ENCODE measurements at regions of chr19 and their contacts with region 1.

Region 1: DNA sequence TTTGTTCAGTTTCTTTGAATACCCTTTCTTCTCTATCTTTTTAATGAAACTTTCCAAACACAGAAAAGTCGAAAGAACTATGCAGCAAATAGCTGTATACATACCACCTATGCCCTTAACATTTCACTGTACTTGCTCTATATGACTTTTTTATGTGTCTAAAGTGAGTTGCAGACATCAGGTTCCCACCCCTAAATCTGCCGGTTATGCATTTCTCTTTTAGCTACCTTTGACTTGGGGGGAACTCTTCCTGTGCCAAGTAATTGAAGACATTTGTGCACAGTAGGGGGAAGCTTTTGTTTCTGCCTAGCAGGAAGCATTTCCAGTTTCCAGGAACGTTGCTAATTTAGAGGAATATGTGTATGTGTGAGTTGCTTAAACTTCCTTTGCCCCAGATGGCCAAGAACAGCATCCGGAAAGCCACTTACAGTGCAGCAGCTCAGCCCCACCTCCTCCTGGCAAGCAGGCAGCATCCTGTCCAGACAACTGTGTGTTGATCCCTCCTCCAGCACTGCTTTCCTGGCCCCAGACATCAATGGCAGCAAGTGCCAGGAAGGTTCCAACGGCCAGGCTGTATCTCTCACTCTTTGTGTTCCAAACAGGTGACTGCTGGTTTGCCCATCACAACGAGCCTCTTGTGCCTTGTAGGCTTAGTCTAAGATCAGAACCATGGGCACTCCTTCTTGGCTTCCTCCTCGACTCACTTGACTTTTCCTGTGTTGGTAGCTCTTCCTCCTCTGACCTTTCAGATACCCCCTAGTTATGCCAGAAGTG is 14.7 kb upstream of the GRAMD1A start:
- DNase-seq: peak in 5 of 9 experiments; percentile 30 to 70 (median 49)
- ATAC-seq: peak; percentile 65
- H3K4me3 ChIP-seq: peak overlapping the region in 1 of 2 experiments; percentile 12
- H3K4me3 Mint-ChIP-seq: peak overlapping the region; percentile 63
- H3K27ac ChIP-seq: peak overlapping the region; percentile 29 to 36
- H3K27ac Mint-ChIP-seq: peak overlapping the region; percentile 92
- H3K4me1 ChIP-seq: peaks cover 13% of the 10 kb centered on the region
- H3K4me1 Mint-ChIP-seq: peaks cover 14% of the 10 kb centered on the region
- H3K27me3 ChIP-seq: no peaks in the 10 kb centered on the region
- H3K27me3 Mint-ChIP-seq: no peaks in the 10 kb centered on the region
- CTCF ChIP-seq: no peak

Region 2: GRCh38 chr19:34692549-34692948 is 292.9 kb before region 1 on chr19:
- CTCF ChIA-PET with region 1: no interaction called
- POLR2A ChIA-PET with region 1: no interaction called
- intact Hi-C with region 1: no loop called
- DNase-seq: no peak
- ATAC-seq: no peak
- H3K4me3 ChIP-seq: no peak overlapping the region
- H3K4me3 Mint-ChIP-seq: no peak overlapping the region
- H3K27ac ChIP-seq: no peak overlapping the region
- H3K27ac Mint-ChIP-seq: no peak overlapping the region
- H3K4me1 ChIP-seq: no peaks in the 10 kb centered on the region
- H3K4me1 Mint-ChIP-seq: no peaks in the 10 kb centered on the region
- H3K27me3 ChIP-seq: no peaks in the 10 kb centered on the region
- H3K27me3 Mint-ChIP-seq: peaks cover 49% of the 10 kb centered on the region
- CTCF ChIP-seq: no peak

Region 3: GRCh38 chr19:34999498-35000341 is 14.3 kb after region 1 on chr19 and contains the start of gene GRAMD1A:
- CTCF ChIA-PET with region 1: interaction called, 6 read pairs
- POLR2A ChIA-PET with region 1: interaction called, 14 read pairs
- intact Hi-C with region 1: no loop called
- DNase-seq: peak; percentile 33 to 85 (median 70)
- ATAC-seq: peak; percentile 37
- H3K4me3 ChIP-seq: peak within 1 kb of the TSS; percentile 64 to 71
- H3K4me3 Mint-ChIP-seq: peak within 1 kb of the TSS; percentile 97
- H3K27ac ChIP-seq: peak within 1 kb of the TSS; percentile 86 to 89
- H3K27ac Mint-ChIP-seq: peak within 1 kb of the TSS; percentile 98
- H3K4me1 ChIP-seq: peaks cover 79% of the 10 kb centered on the region
- H3K4me1 Mint-ChIP-seq: peaks cover 64% of the 10 kb centered on the region
- H3K27me3 ChIP-seq: no peaks in the 10 kb centered on the region
- H3K27me3 Mint-ChIP-seq: no peaks in the 10 kb centered on the region
- CTCF ChIP-seq: no peak
- total RNA-seq, gene GRAMD1A: 207 to 221 TPM

Region 4: DNA sequence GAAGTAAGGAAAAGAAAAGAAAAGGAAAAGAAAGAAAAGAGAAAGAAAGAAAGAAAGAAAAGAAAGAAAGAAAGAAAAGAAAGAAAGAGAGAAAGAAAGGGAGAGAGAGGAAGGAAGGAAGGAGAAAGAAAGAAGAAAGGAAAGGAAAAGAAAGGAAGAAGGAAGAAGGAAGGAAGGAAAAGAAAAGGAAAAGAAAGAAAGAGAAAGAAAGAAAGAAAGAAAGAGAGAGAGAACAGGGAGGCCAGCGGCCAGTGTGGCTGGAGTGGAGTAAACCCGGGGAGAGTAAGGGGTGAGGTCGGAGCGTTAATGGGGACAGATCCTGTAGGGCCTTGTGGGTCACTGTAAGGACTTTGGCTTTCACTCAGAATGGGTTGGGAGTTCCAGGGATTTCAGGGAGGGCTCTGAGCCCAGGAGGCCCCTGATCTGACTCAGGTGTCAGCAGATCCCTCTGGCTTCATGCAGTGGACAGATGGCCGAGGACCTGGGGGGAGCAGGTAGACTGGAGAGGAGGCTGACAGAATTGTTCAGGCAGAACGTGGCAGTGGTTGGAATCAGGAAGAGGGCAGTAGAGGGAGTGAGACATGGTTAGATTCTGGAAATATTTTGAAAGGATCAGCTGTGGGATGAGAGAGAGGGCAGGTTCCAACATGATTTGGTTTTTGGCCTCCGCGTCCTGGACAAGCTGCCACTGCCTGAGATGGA is 110.4 kb after region 1 on chr19:
- CTCF ChIA-PET with region 1: no interaction called
- POLR2A ChIA-PET with region 1: no interaction called
- intact Hi-C with region 1: no loop called
- DNase-seq: no peak
- ATAC-seq: no peak
- H3K4me3 ChIP-seq: no peak overlapping the region
- H3K4me3 Mint-ChIP-seq: no peak overlapping the region
- H3K27ac ChIP-seq: no peak overlapping the region
- H3K27ac Mint-ChIP-seq: no peak overlapping the region
- H3K4me1 ChIP-seq: peaks cover 2% of the 10 kb centered on the region
- H3K4me1 Mint-ChIP-seq: no peaks in the 10 kb centered on the region
- H3K27me3 ChIP-seq: no peaks in the 10 kb centered on the region
- H3K27me3 Mint-ChIP-seq: no peaks in the 10 kb centered on the region
- CTCF ChIP-seq: no peak